A549 (cell line): ENCODE measurements at regions of chr17 and their contacts with region 1.

Region 1: GRCh38 chr17:41329281-41329948 is 13.9 kb upstream of the KRTAP17-1 start:
- DNase-seq: peak; percentile 78 to 79
- ATAC-seq: peak; percentile 75 to 95
- H3K4me3 ChIP-seq: no peak overlapping the region
- H3K27ac ChIP-seq: peak overlapping the region in 1 of 2 experiments; percentile 44; a peak in 1 of 6 replicates
- H3K4me1 ChIP-seq: no peaks in the 10 kb centered on the region
- CTCF ChIP-seq: peak; percentile 73
- EP300 ChIP-seq: no peak
- POLR2A ChIP-seq: no peak
- RAD21 ChIP-seq: peak; percentile 88 to 95

Region 2: GRCh38 chr17:40803617-40804082 is 525.8 kb before region 1 on chr17:
- CTCF ChIA-PET with region 1: interaction called, 19 read pairs
- POLR2A ChIA-PET with region 1: no interaction called
- DNase-seq: peak; percentile 88 to 96
- ATAC-seq: peak; percentile 99
- H3K4me3 ChIP-seq: no peak overlapping the region
- H3K27ac ChIP-seq: peak overlapping the region; percentile 27 to 56; a peak in 4 of 6 replicates
- H3K4me1 ChIP-seq: peaks cover 7% of the 10 kb centered on the region
- CTCF ChIP-seq: peak; percentile 98
- EP300 ChIP-seq: no peak
- POLR2A ChIP-seq: no peak
- RAD21 ChIP-seq: peak; percentile 100

Region 3: GRCh38 chr17:40903129-40904065 is 426.0 kb before region 1 on chr17:
- CTCF ChIA-PET with region 1: interaction called, 12 read pairs
- POLR2A ChIA-PET with region 1: interaction called, 9 read pairs
- DNase-seq: peak; percentile 94 to 96
- ATAC-seq: peak; percentile 86 to 91
- H3K4me3 ChIP-seq: peak overlapping the region; percentile 33
- H3K27ac ChIP-seq: peak overlapping the region; percentile 91 to 93
- H3K4me1 ChIP-seq: peaks cover 34% of the 10 kb centered on the region
- CTCF ChIP-seq: no peak
- EP300 ChIP-seq: peak; percentile 71 to 74; a peak in 4 of 5 replicates
- POLR2A ChIP-seq: no peak
- RAD21 ChIP-seq: peak; percentile 2 to 29; a peak in 1 of 5 replicates

Region 4: DNA sequence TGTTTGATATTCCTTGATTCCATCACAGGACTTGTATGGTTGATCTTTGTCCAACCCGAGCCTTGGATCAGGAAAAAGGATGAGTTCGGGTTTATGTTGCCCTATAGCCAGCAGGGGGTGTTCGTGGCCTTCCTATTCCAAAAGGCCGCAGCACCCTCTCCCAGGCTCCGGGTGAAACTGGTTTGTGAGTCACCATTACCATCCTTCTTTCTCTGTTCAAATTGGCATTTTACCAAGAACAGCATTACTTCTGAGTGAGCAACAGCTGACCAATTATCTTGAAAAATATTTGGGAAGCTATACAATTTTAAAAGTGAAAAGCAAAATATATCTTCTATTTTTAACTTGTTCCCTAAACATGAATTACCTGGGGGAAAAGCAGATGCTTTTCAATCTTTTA is 420.1 kb before region 1 on chr17:
- CTCF ChIA-PET with region 1: interaction called, 16 read pairs
- POLR2A ChIA-PET with region 1: interaction called, 9 read pairs
- DNase-seq: peak; percentile 91 to 92
- ATAC-seq: peak; percentile 91 to 95
- H3K4me3 ChIP-seq: no peak overlapping the region
- H3K27ac ChIP-seq: peak overlapping the region; percentile 62 to 65
- H3K4me1 ChIP-seq: peaks cover 31% of the 10 kb centered on the region
- CTCF ChIP-seq: peak; percentile 98
- EP300 ChIP-seq: no peak
- POLR2A ChIP-seq: no peak
- RAD21 ChIP-seq: peak; percentile 99 to 100

Region 5: GRCh38 chr17:41315814-41316445 is 13.5 kb before region 1 on chr17:
- CTCF ChIA-PET with region 1: interaction called, 35 read pairs
- POLR2A ChIA-PET with region 1: no interaction called
- DNase-seq: no peak
- ATAC-seq: no peak
- H3K4me3 ChIP-seq: no peak overlapping the region
- H3K27ac ChIP-seq: no peak overlapping the region
- H3K4me1 ChIP-seq: no peaks in the 10 kb centered on the region
- CTCF ChIP-seq: no peak
- EP300 ChIP-seq: no peak
- POLR2A ChIP-seq: no peak
- RAD21 ChIP-seq: no peak

Region 6: GRCh38 chr17:41340934-41341861 is 11.8 kb after region 1 on chr17:
- CTCF ChIA-PET with region 1: interaction called, 10 read pairs
- POLR2A ChIA-PET with region 1: no interaction called
- DNase-seq: no peak
- ATAC-seq: no peak
- H3K4me3 ChIP-seq: no peak overlapping the region
- H3K27ac ChIP-seq: no peak overlapping the region
- H3K4me1 ChIP-seq: no peaks in the 10 kb centered on the region
- CTCF ChIP-seq: no peak
- EP300 ChIP-seq: no peak
- POLR2A ChIP-seq: no peak
- RAD21 ChIP-seq: no peak

Region 7: GRCh38 chr17:41352597-41353366 is 23.4 kb after region 1 on chr17:
- CTCF ChIA-PET with region 1: interaction called, 19 read pairs
- POLR2A ChIA-PET with region 1: no interaction called
- DNase-seq: no peak
- ATAC-seq: peak in 1 of 2 experiments; percentile 47; a peak in 1 of 6 replicates
- H3K4me3 ChIP-seq: no peak overlapping the region
- H3K27ac ChIP-seq: no peak overlapping the region
- H3K4me1 ChIP-seq: no peaks in the 10 kb centered on the region
- CTCF ChIP-seq: no peak
- EP300 ChIP-seq: no peak
- POLR2A ChIP-seq: no peak
- RAD21 ChIP-seq: no peak